Endothelial cell of umbilical vein (primary cell): ENCODE measurements at regions of chr1 and their contacts with region 1.

Region 1: GRCh38 chr1:77605246-77606026 is 77.0 kb downstream of the ZZZ3 start:
- DNase-seq: peak; percentile 59
- H3K4me3 ChIP-seq: no peak overlapping the region
- H3K27ac ChIP-seq: no peak overlapping the region
- H3K4me1 ChIP-seq: no peaks in the 10 kb centered on the region
- H3K27me3 ChIP-seq: no peaks in the 10 kb centered on the region
- CTCF ChIP-seq: no peak
- POLR2A ChIP-seq: no peak

Region 2: DNA sequence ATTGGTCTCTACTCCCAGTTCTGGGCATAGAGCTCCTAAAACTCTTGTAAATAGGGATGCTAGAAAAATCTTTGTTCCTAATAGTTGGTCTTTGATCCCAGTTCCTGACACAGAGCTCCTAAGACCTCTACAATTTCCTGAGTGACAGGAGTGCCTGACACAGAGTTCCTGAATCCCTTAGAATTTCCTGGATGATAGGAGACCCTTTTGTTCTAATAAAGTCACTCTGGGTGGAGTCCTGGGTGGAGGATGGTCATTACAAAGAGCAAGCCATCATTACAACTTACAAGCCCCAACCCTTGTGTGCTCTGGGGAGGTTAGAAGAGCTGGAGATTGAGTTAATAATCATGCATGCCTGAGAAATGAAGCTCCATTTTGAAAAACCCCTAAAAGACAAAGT is 18.7 kb after region 1 on chr1:
- CTCF ChIA-PET with region 1: interaction called, 3 read pairs
- POLR2A ChIA-PET with region 1: no interaction called
- dilution Hi-C with region 1: no loop called
- intact Hi-C with region 1: loop called (anchors 2 kb)
- DNase-seq: peak; percentile 30
- H3K4me3 ChIP-seq: no peak overlapping the region
- H3K27ac ChIP-seq: no peak overlapping the region
- H3K4me1 ChIP-seq: peaks cover 34% of the 10 kb centered on the region
- H3K27me3 ChIP-seq: no peaks in the 10 kb centered on the region
- CTCF ChIP-seq: no peak
- POLR2A ChIP-seq: no peak